ENCODE measurements at regions of chr2 and their contacts with region 1.

Region 1: DNA sequence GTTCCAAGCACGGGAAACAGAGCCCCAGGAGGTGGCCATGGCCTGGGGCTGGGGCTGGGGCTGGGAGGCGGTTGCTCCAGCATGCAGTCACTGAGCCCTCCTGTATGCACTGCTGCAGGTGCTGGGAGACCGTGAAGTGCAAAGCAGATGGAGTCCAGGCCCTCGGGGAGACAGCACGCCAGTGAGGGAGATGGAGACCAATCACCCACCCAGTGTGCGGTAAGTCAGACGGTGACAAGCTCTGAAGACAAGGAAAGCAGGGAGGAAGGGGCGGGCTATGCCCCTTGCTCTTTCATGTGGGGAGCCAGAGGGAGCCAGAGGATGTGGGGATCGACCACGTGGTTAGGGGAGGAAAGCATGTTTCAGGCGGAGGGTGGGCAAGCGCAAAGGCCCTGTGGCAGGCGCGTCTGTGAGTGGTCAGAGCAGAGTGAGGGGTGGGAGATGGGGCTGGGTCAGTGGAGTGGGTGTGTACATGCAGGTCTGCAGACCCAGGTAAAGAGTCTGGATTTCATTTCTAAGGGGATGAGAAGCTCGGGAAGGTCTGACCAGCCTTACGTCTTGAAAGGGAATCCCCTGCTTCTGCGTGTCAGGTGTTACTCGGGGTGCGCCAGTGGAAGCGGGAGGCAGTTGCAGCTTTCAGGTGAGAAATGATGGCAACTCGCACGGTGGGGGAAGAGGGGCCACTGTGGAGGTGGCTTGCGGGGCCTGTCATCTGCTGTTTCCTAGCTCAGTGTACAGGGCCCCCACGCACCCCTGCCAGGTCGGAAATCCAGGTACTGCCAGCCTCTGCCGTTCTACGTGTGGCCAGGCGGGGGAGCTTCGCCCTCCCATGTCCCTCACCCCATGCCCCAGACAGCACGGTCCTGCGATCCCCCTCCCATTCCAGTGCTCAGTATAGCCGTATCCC is 19.4 kb downstream of the RRM2 start:
- DNase-seq: peak in 1 of 2 experiments; percentile 58
- ATAC-seq: peak; percentile 76 to 86
- H3K4me3 ChIP-seq: no peak overlapping the region
- H3K27ac ChIP-seq: no peak overlapping the region
- H3K4me1 ChIP-seq: peaks cover 7% of the 10 kb centered on the region
- CTCF ChIP-seq: peak; percentile 68
- EP300 ChIP-seq: no peak
- POLR2A ChIP-seq: no peak
- RAD21 ChIP-seq: peak; percentile 79 to 80

Region 2: GRCh38 chr2:10162586-10163497 is 20.9 kb after region 1 on chr2:
- CTCF ChIA-PET with region 1: interaction called, 61 read pairs
- POLR2A ChIA-PET with region 1: no interaction called
- DNase-seq: peak in 1 of 2 experiments; percentile 27
- ATAC-seq: peak; percentile 20 to 38; a peak in 2 of 6 replicates
- H3K4me3 ChIP-seq: no peak overlapping the region
- H3K27ac ChIP-seq: no peak overlapping the region
- H3K4me1 ChIP-seq: no peaks in the 10 kb centered on the region
- CTCF ChIP-seq: 0 out of 3 replicates have a peak, but pooled peaks have one; percentile 7
- EP300 ChIP-seq: no peak
- POLR2A ChIP-seq: no peak
- RAD21 ChIP-seq: peak; percentile 21 to 31; a peak in 2 of 5 replicates

Region 3: GRCh38 chr2:10260130-10260529 is 118.1 kb after region 1 on chr2:
- CTCF ChIA-PET with region 1: interaction called, 10 read pairs
- POLR2A ChIA-PET with region 1: no interaction called
- DNase-seq: no peak
- ATAC-seq: no peak; a peak in 1 of 6 replicates
- H3K4me3 ChIP-seq: no peak overlapping the region
- H3K27ac ChIP-seq: no peak overlapping the region
- H3K4me1 ChIP-seq: peaks cover 12% of the 10 kb centered on the region
- CTCF ChIP-seq: no peak
- EP300 ChIP-seq: no peak
- POLR2A ChIP-seq: no peak
- RAD21 ChIP-seq: no peak

Region 4: DNA sequence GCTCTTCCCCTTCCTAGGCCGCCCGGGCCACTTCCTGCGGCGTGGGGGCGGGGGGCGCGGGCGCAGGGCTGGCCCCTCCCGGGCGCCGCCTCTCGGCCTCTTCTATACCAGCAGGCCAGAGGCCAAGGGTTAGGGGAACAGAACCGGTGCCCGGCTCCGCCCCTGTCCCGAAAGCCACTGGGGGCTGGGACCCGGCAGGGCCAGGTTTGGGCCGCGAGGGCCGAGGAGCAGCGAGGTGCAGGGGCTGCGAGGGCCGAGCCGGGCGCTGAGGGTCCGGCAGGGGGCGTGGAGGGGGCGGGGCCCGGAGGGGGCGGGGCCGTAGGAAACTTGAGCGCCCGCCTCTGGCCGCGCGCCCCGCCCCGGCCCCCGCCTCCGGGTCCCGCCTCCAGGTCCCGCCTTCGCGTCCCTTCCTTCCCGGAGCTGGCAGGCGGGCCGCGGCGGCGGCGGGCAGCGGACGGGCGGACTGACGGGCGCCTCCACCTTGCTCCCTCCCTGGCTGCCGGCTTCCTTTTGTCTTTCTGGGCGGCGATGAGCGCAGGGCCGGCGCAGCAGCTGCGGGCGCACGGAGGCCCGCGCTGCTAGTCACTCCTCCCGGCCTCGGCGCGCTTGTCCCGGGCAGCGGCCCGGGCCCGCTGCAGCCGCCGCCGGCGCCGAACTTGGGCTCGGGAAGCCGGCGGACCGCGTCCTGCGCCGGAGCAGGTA is 160.6 kb after region 1 on chr2 and contains the start of gene HPCAL1:
- CTCF ChIA-PET with region 1: interaction called, 40 read pairs
- POLR2A ChIA-PET with region 1: no interaction called
- DNase-seq: peak; percentile 92 to 93
- ATAC-seq: peak; percentile 79 to 91
- H3K4me3 ChIP-seq: peak within 1 kb of the TSS; percentile 84
- H3K27ac ChIP-seq: peak within 1 kb of the TSS; percentile 95 to 98
- H3K4me1 ChIP-seq: peaks cover 62% of the 10 kb centered on the region
- CTCF ChIP-seq: peak; percentile 68
- EP300 ChIP-seq: no peak
- POLR2A ChIP-seq: peak; percentile 91
- RAD21 ChIP-seq: peak; percentile 36 to 78; a peak in 4 of 5 replicates
- polyA plus RNA-seq, gene HPCAL1: 37.8 and 44.4 TPM in 2 replicates

Region 5: GRCh38 chr2:10424051-10424450 is 282.1 kb after region 1 on chr2:
- CTCF ChIA-PET with region 1: interaction called, 19 read pairs
- POLR2A ChIA-PET with region 1: no interaction called
- DNase-seq: no peak
- ATAC-seq: no peak
- H3K4me3 ChIP-seq: no peak overlapping the region
- H3K27ac ChIP-seq: no peak overlapping the region
- H3K4me1 ChIP-seq: no peaks in the 10 kb centered on the region
- CTCF ChIP-seq: no peak
- EP300 ChIP-seq: no peak
- POLR2A ChIP-seq: no peak
- RAD21 ChIP-seq: no peak